ENCODE measurements at regions of chr3 and their contacts with region 1.

Region 1: GRCh38 chr3:6287088-6287875 is 573.6 kb upstream of the GRM7 start:
- DNase-seq: no peak
- ATAC-seq: no peak
- H3K4me3 ChIP-seq: no peak overlapping the region
- H3K27ac ChIP-seq: no peak overlapping the region
- H3K4me1 ChIP-seq: no peaks in the 10 kb centered on the region
- H3K27me3 ChIP-seq: no peaks in the 10 kb centered on the region
- CTCF ChIP-seq: no peak
- POLR2A ChIP-seq: no peak
- RAD21 ChIP-seq: no peak

Region 2: GRCh38 chr3:6315906-6316305 is 28.6 kb after region 1 on chr3:
- CTCF ChIA-PET with region 1: no interaction called
- POLR2A ChIA-PET with region 1: no interaction called
- dilution Hi-C with region 1: no loop called
- in situ Hi-C with region 1: no loop called
- intact Hi-C with region 1: loop called (anchors 1 kb)
- DNase-seq: no peak
- ATAC-seq: no peak
- H3K4me3 ChIP-seq: no peak overlapping the region
- H3K27ac ChIP-seq: no peak overlapping the region
- H3K4me1 ChIP-seq: no peaks in the 10 kb centered on the region
- H3K27me3 ChIP-seq: no peaks in the 10 kb centered on the region
- CTCF ChIP-seq: no peak
- POLR2A ChIP-seq: no peak
- RAD21 ChIP-seq: no peak